H1 (cell line): ENCODE measurements at regions of chr20 and their contacts with region 1.

Region 1: DNA sequence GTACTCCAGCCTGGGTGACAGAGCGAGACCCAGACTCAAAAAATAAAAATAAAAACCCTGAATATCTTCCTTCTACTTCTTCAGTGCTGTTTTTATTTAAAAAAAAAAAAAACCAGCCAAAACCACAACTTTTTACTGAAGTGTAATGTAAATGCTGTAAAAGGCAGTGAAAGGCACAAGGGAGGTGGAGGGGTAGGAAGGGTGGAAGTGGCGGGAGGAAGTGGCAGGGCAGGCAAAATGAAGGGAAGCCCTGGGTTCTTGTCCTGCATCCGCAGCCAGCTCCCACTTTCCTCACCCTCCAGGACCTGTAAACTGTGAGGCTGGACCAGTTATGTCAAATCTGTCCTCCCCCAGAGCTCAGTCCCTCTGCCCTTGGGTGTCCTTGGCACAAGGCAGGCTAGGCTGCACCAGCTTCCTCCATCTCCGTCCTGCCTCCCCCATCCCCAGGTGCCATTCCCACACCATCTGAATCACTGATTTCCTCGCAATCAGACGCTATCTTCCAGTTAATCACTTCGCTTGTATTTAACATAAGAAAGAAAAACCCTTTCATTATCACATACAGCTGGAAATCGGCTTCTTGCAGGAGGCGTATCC is 13.7 kb upstream of the PANK2 start:
- DNase-seq: no peak
- H3K4me3 ChIP-seq: no peak overlapping the region
- H3K27ac ChIP-seq: no peak overlapping the region
- H3K4me1 ChIP-seq: no peaks in the 10 kb centered on the region
- H3K27me3 ChIP-seq: no peaks in the 10 kb centered on the region
- CTCF ChIP-seq: no peak
- EP300 ChIP-seq: no peak
- POLR2A ChIP-seq: no peak
- RAD21 ChIP-seq: no peak

Region 2: DNA sequence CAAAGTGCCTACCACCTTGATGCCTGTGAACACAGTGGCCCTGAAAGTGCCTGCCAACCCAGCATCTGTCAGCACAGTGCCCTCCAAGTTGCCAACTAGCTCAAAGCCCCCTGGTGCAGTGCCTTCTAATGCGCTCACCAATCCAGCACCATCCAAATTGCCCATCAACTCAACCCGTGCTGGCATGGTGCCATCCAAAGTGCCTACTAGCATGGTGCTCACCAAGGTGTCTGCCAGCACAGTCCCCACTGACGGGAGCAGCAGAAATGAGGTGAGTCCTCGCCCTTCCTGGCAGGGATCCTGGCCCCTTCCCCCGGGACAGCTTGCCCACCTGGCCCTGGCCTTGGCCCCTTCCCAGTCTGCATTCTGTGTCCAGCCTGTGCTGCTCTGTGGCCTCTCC is 11.0 kb before region 1 on chr20:
- CTCF ChIA-PET with region 1: interaction called, 3 read pairs
- POLR2A ChIA-PET with region 1: interaction called, 34 read pairs
- DNase-seq: no peak
- H3K4me3 ChIP-seq: no peak overlapping the region
- H3K27ac ChIP-seq: no peak overlapping the region
- H3K4me1 ChIP-seq: no peaks in the 10 kb centered on the region
- H3K27me3 ChIP-seq: no peaks in the 10 kb centered on the region
- CTCF ChIP-seq: no peak
- EP300 ChIP-seq: no peak
- POLR2A ChIP-seq: no peak
- RAD21 ChIP-seq: no peak